ENCODE measurements at regions of chr4 and their contacts with region 1.

Region 1: GRCh38 chr4:88809576-88810219 is 112.1 kb upstream of the NAP1L5 start:
- DNase-seq: no peak
- H3K4me3 ChIP-seq: no peak overlapping the region
- H3K27ac ChIP-seq: no peak overlapping the region
- H3K4me1 ChIP-seq: no peaks in the 10 kb centered on the region
- H3K27me3 ChIP-seq: no peaks in the 10 kb centered on the region
- CTCF ChIP-seq: no peak

Region 2: DNA sequence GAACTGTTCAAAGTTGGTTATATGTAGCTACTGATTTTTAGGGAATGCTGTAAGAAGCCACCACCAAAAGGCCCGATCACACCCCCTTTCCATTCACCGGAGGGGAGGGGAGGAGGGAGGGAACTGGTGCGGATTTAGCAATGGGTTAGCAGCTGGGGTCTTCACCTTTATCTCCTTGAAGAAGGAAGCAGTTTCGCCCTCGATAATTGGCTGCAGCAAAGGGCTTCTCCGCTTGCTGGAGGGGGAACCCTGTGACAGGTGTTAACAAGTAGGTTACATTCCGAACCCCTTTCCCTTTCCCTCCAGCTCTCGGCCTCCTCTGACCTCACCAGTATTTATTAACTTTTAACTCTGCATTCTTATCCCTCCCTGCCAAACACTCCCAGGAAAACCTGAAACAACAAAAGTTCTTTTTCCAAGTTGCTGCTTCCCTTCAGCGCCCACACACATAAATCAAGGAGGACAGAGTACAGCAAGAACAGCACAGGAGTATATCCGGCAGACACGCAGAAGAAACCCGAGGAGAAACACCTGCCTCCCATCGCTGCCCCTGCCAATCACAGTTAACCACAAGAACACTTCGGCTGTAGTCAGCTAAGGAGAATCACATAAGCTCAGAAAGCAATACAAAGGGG is 72.3 kb before region 1 on chr4:
- CTCF ChIA-PET with region 1: no interaction called
- dilution Hi-C with region 1: loop called (anchors 5 kb)
- in situ Hi-C with region 1: no loop called
- intact Hi-C with region 1: no loop called
- DNase-seq: peak; percentile 27
- H3K4me3 ChIP-seq: no peak overlapping the region
- H3K27ac ChIP-seq: no peak overlapping the region
- H3K4me1 ChIP-seq: no peaks in the 10 kb centered on the region
- H3K27me3 ChIP-seq: no peaks in the 10 kb centered on the region
- CTCF ChIP-seq: no peak

Measured in mammary epithelial cell (primary cell).